ENCODE measurements at regions of chr15 and their contacts with region 1.

Region 1: GRCh38 chr15:90412356-90413194 is 24.5 kb downstream of the IQGAP1 start:
- DNase-seq: peak in 2 of 35 experiments; percentile 27 to 38
- ATAC-seq: peak; percentile 50 to 59 (median 52)
- H3K4me3 ChIP-seq: peak overlapping the region in 1 of 2 donors; percentile 11
- H3K4me3 Mint-ChIP-seq: peak overlapping the region in 2 of 3 donors; percentile 18 to 47
- H3K27ac ChIP-seq: no peak overlapping the region
- H3K27ac Mint-ChIP-seq: peak overlapping the region; percentile 70 to 77
- H3K4me1 ChIP-seq: peaks cover 28 to 48% of the 10 kb centered on the region in 2 experiments
- H3K4me1 Mint-ChIP-seq: peaks cover 81 to 86% (median 83%) of the 10 kb centered on the region in 3 donors
- H3K27me3 ChIP-seq: no peaks in the 10 kb centered on the region
- H3K27me3 Mint-ChIP-seq: no peaks in the 10 kb centered on the region

Region 2: DNA sequence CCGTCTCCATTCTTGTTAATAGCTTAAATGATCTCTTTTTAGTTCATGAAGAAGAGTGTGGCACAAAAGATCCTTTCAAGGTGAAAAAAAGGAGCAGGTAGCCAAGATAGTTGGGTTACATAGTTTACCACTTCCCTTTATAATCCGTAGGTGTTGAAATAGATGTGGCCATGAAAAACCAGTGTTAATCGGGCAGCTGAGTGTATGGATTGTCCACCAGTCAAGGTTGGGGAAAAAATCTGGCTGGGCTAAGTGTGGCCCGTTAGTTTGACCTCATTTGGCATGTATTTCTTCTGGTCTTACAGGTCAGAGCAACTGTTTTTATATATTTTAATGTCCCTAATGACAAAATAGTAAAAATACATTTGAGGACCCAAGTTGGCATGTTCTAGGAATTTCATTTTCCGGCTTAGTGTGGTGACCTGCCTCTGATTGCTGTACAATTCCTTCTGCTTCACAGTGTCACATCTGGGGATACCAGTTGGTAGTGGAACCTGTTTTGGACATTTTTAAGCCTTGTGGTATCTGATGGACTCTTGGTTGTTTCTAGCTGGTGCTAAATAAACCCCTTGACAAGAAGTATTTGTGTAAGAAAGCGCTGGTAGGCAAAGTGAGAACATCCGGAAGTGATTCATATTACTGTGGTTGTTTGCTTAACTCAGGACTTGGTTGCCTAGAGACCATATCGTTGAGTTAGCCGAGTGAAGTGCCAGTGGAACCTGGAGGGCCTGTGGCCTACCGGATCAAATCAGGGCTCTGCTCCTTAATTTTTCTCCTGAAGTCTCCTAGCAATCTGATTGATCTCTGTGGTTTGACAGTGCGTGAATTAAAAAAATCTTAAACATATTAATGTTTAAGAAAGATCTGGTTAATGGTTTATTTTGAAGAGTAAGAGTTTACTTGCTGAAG is 11.9 kb before region 1 on chr15:
- CTCF ChIA-PET with region 1: interaction called in 1 of 2 experiments, 3 read pairs
- POLR2A ChIA-PET with region 1: interaction called in 1 of 2 experiments, 10 read pairs
- DNase-seq: peak in 34 of 35 experiments; percentile 18 to 92 (median 56)
- ATAC-seq: peak; percentile 95 to 100 (median 100)
- H3K4me3 ChIP-seq: peak overlapping the region; percentile 31 to 35
- H3K4me3 Mint-ChIP-seq: peak overlapping the region; percentile 66 to 71 (median 70)
- H3K27ac ChIP-seq: peak overlapping the region; percentile 99
- H3K27ac Mint-ChIP-seq: peak overlapping the region; percentile 97 to 98
- H3K4me1 ChIP-seq: peaks cover 25 to 37% of the 10 kb centered on the region in 2 experiments
- H3K4me1 Mint-ChIP-seq: peaks cover 66 to 73% (median 72%) of the 10 kb centered on the region in 3 donors
- H3K27me3 ChIP-seq: no peaks in the 10 kb centered on the region
- H3K27me3 Mint-ChIP-seq: no peaks in the 10 kb centered on the region

Region 3: GRCh38 chr15:90425726-90426346 is 13.3 kb after region 1 on chr15:
- CTCF ChIA-PET with region 1: no interaction called
- POLR2A ChIA-PET with region 1: no interaction called
- DNase-seq: no peak
- ATAC-seq: no peak
- H3K4me3 ChIP-seq: no peak overlapping the region
- H3K4me3 Mint-ChIP-seq: no peak overlapping the region
- H3K27ac ChIP-seq: no peak overlapping the region
- H3K27ac Mint-ChIP-seq: peak overlapping the region in 1 of 2 donors; percentile 64
- H3K4me1 ChIP-seq: peaks cover 5 to 21% of the 10 kb centered on the region in 2 experiments
- H3K4me1 Mint-ChIP-seq: peaks cover 41 to 45% (median 44%) of the 10 kb centered on the region in 3 donors
- H3K27me3 ChIP-seq: no peaks in the 10 kb centered on the region
- H3K27me3 Mint-ChIP-seq: no peaks in the 10 kb centered on the region

Measured in T-cell (primary cell).